Breast epithelium (tissue), 4 donors: ENCODE measurements at regions of chr4 and their contacts with region 1.

Region 1: DNA sequence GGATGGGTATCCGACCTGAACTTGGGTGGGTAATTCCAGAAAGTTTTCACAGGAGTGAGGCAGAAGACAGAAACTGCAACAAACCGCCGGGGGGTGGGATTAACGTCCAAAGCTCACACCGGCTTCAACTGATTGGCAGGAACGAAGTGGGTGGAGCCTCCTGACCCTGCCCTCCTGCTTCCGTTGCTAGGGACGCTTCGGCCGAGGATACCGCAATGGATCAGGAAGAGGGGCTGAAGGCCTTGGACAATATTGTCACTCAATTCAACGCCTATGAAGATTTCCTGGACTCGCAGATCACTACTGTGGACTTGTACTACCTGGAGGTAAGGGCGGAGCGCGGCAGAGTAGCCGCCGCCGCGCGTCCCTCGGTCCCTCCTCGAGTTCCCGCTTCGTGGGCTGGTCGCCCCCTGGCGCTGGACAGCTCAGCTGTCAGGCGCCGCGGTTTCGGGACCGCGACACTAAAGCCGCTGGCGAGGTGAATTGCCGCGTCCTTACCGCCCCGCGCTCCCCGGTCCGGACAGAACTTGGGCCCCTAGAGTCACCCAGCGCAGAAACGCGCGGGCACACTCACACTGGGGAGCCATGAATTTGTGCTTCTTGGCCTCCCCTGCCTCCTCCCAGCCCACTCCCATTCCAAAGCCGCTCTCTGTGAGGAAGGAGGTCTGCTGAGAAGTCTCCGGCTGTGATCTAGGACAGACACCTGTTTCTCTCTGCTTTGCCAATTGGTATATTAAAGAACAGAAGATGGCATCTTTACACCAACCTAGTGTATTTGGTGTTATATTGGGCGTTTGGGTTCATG is at the start of gene CFAP299:
- DNase-seq: peak; percentile 55 to 70
- H3K4me3 ChIP-seq: peak within 1 kb of the TSS; percentile 40 to 68 (median 58)
- H3K27ac ChIP-seq: no peak within 1 kb of the TSS
- H3K4me1 ChIP-seq: no peaks in the 10 kb centered on the region
- H3K27me3 ChIP-seq: peaks cover 0 to 17% of the 10 kb centered on the region in 2 donors
- CTCF ChIP-seq: peak in 1 of 3 donors; percentile 31
- POLR2A ChIP-seq: no peak
- total RNA-seq, gene CFAP299: under 0.01 to 0.15 TPM in 2 of 3 donors, not detected in the other

Region 2: DNA sequence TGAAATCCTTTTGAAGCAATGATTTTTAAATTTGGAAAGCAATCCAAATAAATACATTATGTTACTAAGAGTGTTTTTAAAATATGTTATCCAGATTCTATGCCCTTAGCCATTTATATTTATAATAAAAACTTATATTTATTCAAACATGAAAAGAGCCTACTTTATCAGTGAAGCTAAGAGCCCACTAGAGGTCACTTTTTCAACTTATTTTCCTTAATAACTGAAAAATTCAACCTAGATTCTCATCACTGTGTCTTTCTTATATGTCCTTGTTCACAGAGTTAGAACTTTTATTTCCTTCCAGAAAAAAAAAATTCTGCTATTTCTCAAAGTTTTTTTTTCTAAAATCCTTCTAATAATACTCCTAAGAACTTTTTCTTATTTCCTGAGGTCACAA is 114.6 kb before region 1 on chr4:
- intact Hi-C with region 1: loop called (anchors 10 kb)
- DNase-seq: no peak
- H3K4me3 ChIP-seq: no peak overlapping the region
- H3K27ac ChIP-seq: no peak overlapping the region
- H3K4me1 ChIP-seq: no peaks in the 10 kb centered on the region
- H3K27me3 ChIP-seq: peaks cover 0 to 14% of the 10 kb centered on the region in 2 donors
- CTCF ChIP-seq: no peak
- POLR2A ChIP-seq: no peak

Region 3: DNA sequence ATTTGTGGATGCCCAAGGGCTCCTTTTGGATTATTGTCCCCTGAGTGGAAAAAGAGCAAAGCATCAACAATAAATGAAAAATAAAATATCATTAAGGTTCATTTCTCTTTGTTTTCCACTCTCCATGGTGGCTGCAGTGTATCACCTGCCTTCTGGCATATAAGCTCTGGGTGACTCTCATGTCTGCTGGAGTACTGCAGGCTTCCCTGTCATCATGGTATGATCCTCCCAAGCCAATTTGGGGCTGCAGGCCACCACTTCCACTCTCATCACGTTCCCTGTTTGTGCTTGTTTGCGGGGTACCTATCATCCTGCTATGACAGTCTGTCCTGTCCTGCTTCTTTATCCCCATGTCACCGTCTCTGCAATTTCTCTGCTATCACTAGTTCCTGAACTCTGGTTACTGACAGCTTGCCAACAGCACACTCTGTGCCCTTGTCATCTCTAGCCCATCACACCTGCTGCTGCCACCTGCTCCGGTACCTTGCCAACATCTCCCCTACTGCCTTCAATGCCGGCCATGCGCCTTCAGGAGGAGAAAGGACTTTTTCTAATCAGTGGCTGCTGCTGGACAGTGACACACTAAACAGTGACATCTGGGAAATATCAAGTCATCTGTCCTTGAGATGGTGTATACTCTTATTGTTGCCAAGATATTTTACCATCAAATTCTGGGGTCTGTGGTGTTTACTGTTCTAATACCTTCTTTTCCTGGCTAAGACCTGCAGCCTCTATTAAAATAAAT is 92.3 kb before region 1 on chr4:
- intact Hi-C with region 1: no loop called
- DNase-seq: no peak
- H3K4me3 ChIP-seq: no peak overlapping the region
- H3K27ac ChIP-seq: no peak overlapping the region
- H3K4me1 ChIP-seq: no peaks in the 10 kb centered on the region
- H3K27me3 ChIP-seq: peaks cover 0 to 9% of the 10 kb centered on the region in 2 donors
- CTCF ChIP-seq: no peak
- POLR2A ChIP-seq: no peak